ENCODE measurements at regions of chr5 and their contacts with region 1.

Region 1: DNA sequence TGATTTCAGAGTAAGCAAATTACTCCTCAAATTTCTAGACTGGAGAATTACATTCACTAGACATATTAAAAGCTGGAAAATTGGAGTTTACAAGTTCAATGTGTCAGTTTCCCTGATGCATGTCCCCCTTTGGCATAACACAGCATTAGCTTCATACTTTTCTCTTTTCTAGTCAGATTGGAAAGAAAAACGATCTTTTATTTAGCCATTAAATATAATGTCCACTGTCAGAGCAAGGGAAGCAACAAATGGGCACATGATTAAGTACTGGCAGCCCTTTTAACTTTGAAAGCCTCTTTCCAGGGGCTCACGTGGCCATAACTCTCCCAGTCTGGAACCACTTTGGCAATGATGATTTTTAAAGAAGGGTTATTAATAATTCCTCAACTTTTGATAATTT is 203.3 kb downstream of the KCNN2 start:
- DNase-seq: no peak
- H3K27ac ChIP-seq: no peak overlapping the region
- CTCF ChIP-seq: no peak

Region 2: GRCh38 chr5:113663880-113664541 is 901.1 kb before region 1 on chr5:
- CTCF ChIA-PET with region 1: no interaction called
- POLR2A ChIA-PET with region 1: no interaction called
- DNase-seq: no peak
- H3K27ac ChIP-seq: no peak overlapping the region
- CTCF ChIP-seq: no peak

Region 3: GRCh38 chr5:115050866-115051265 is 485.7 kb after region 1 on chr5:
- CTCF ChIA-PET with region 1: no interaction called
- POLR2A ChIA-PET with region 1: no interaction called
- DNase-seq: no peak
- H3K27ac ChIP-seq: no peak overlapping the region
- CTCF ChIP-seq: no peak

Region 4: DNA sequence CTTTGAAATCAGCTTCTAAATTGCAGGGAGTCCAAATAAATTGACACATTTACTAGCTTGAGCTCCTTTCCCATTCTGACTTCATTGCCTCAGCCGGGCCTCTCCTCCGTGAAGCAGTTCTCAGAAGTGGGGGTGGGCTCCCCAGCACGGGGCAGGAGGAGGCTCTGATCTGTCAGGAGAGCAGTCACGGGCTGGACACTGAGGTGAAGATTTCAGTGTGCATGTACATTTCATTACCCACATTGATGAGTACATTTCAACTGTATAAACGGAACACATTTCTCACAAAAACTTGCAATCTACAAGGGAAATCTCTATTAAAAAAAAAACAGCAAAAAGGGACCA is 1813.6 kb after region 1 on chr5:
- CTCF ChIA-PET with region 1: interaction called, 15 read pairs
- POLR2A ChIA-PET with region 1: no interaction called
- DNase-seq: no peak
- H3K27ac ChIP-seq: no peak overlapping the region
- CTCF ChIP-seq: no peak